Body of pancreas (tissue), 4 donors: ENCODE measurements at regions of chr17 and their contacts with region 1.

Region 1: DNA sequence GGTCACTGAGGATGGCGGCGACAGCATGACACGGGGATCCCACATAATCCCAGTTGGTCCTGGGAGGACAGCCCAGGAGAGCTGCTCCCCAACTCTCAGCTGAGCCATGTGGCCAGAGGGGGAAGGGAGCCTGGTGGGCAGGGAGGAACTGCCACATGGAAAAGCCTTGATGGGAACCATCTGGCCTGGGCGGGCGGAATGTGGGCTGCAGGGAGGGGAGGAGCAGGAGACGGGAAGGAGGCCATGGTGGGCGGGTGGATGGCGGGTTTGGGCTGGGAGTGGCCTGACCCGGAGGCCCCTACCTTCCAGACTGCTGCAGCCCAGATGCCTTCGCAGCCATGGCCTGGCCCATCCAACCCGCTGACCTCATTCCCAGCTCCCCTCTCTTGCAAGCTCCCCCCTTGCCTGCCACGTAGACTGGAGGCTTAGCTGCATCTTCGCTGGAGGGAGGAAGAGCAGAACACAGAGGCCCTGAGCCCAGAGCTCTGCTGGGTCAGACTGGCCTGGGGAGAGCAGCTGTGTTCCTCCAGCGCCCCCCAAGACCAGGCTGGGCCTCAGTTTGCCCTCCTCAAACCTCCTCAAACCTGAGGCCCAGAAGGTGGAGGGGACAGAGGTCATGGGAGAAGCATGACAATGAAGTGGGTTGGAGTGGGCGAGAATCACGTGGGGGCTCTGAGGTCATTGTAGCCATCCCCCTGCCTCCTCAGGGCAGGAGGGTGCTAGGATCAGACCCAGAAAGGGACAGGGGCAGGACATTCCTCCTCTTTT is 8.2 kb upstream of the COL1A1 start:
- DNase-seq: peak; percentile 46 to 66 (median 56)
- ATAC-seq: peak; percentile 66
- H3K4me3 ChIP-seq: no peak overlapping the region
- H3K27ac ChIP-seq: peak overlapping the region in 2 of 4 donors; percentile 35 to 76
- H3K4me1 ChIP-seq: no peaks in the 10 kb centered on the region
- H3K27me3 ChIP-seq: peaks cover 0 to 5% of the 10 kb centered on the region in 2 donors
- CTCF ChIP-seq: no peak
- POLR2A ChIP-seq: peak in 1 of 3 donors; percentile 23

Region 2: GRCh38 chr17:50169121-50169764 is 40.4 kb before region 1 on chr17:
- intact Hi-C with region 1: no loop called
- DNase-seq: peak in 3 of 4 donors; percentile 40 to 57 (median 46)
- ATAC-seq: peak; percentile 66
- H3K4me3 ChIP-seq: no peak overlapping the region
- H3K27ac ChIP-seq: no peak overlapping the region
- H3K4me1 ChIP-seq: no peaks in the 10 kb centered on the region
- H3K27me3 ChIP-seq: no peaks in the 10 kb centered on the region
- CTCF ChIP-seq: peak; percentile 43 to 99 (median 68)
- POLR2A ChIP-seq: no peak

Region 3: DNA sequence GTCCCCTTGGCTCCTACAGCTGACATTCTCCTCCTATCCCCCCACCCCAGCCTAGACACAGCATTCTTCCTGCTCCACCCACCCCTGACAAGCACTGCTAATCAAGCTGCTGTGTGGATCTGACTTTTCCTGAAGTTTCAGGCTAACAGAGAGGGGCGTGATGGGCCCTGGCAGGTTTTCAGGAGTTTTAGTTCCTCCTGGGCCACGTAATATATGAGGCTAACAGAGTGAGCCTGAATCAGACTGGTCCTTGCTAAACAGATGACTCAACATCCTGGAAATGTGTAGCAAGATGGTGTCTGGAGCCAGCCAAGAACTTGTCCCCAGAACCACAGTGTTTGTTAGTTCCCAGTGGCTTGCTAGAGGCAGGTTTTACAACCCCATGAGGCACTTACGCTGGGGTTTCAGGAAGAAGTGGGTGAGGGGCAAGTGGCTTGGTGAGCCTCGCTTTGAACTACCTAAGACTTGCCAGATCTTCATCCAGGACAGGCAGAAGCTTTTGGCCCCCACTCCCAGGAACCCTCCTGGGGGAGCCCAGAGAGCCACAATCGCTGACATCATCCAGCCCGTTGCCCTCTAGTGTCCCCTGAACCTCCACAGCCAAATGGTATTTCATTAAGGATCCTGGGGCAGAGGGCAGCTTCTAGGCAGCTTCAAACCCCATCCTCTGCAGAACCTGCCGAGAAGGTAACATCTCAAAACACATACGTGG is 80.5 kb after region 1 on chr17:
- intact Hi-C with region 1: loop called (anchors 5 kb)
- DNase-seq: peak; percentile 38 to 79 (median 62)
- ATAC-seq: peak; percentile 85
- H3K4me3 ChIP-seq: no peak overlapping the region
- H3K27ac ChIP-seq: peak overlapping the region in 3 of 4 donors; percentile 12 to 67 (median 18)
- H3K4me1 ChIP-seq: no peaks in the 10 kb centered on the region
- H3K27me3 ChIP-seq: no peaks in the 10 kb centered on the region
- CTCF ChIP-seq: no peak
- POLR2A ChIP-seq: no peak